Sciatic nerve (tissue), 2 donors: ENCODE measurements at regions of chr3 and their contacts with region 1.

Region 1: GRCh38 chr3:128584412-128585020 is 66.1 kb downstream of the RPN1 start:
- DNase-seq: peak; percentile 64
- ATAC-seq: peak; percentile 92

Region 2: DNA sequence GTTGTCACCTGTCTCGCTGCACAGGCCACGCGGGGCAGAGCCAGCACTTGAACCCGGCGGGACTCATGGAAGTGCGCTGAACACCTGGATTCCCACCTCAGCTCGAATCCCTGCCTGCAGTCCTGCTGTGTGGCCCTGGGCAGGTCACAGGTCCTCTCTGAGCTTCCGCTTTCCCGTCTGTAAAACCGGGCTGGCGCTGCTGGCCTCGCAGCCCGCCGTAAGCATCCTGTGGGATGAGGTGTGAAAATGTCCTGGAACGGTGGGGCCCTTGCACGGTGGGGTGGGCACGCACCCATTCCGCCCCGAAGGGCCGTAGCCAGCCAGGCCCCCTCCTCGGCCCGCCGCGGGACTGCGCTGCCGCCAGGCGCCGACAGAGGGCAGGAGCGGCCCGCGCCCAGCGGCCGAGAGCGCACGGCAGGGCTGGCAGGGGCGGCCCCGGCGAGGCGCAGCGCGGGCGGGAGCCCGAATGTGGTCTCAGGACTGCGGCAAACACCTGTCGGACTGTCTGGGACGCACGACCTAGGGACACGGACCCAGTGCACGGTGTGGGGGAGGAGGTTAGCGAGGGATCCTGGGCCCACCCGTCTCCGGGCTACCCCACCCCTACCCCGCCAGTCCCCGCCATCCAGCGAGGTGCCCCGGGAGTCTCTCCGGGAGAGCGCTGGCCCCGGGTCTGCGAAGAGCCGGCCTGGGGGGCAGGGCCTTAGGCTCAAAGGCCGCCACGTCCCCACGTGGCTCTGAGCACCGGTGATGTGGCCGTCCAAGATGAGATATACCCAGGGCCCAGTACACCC is 158.2 kb before region 1 on chr3:
- intact Hi-C with region 1: loop called (anchors 10 kb)
- DNase-seq: no peak
- ATAC-seq: peak; percentile 73